Right ventricle myocardium inferior (tissue), 1 donor: ENCODE measurements at regions of chr10 and their contacts with region 1.

Region 1: DNA sequence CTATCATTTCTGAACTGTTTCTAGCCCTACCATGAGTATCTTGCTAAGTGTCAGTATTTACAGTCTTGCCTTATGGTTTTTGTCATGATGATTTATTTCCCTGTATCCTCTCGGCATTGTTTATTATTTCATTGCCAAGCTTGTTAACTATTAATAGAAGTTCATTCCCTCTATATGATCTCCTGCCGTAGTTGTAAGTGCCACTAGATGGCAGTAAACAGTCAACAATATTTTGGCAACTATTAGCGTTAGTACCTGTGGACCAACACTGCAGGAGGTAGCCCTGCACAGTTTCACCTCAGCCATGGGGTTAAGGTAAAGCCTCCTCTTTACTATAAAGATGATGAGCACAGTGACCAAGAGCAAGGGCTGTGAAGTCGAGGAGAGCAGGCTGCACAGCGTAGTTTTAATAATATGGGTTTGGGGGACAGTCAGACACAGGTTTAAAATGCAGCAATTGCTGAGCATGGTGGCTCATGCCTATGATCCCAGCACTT is 26.1 kb upstream of the CCNJ start:
- DNase-seq: no peak
- ATAC-seq: peak; percentile 70

Region 2: GRCh38 chr10:96129387-96130325 is 112.4 kb after region 1 on chr10 and contains the start of gene ZNF518A:
- intact Hi-C with region 1: loop called (anchors 10 kb)
- DNase-seq: peak; percentile 96
- ATAC-seq: peak; percentile 96
- total RNA-seq, gene ZNF518A: 10.9 TPM

Region 3: DNA sequence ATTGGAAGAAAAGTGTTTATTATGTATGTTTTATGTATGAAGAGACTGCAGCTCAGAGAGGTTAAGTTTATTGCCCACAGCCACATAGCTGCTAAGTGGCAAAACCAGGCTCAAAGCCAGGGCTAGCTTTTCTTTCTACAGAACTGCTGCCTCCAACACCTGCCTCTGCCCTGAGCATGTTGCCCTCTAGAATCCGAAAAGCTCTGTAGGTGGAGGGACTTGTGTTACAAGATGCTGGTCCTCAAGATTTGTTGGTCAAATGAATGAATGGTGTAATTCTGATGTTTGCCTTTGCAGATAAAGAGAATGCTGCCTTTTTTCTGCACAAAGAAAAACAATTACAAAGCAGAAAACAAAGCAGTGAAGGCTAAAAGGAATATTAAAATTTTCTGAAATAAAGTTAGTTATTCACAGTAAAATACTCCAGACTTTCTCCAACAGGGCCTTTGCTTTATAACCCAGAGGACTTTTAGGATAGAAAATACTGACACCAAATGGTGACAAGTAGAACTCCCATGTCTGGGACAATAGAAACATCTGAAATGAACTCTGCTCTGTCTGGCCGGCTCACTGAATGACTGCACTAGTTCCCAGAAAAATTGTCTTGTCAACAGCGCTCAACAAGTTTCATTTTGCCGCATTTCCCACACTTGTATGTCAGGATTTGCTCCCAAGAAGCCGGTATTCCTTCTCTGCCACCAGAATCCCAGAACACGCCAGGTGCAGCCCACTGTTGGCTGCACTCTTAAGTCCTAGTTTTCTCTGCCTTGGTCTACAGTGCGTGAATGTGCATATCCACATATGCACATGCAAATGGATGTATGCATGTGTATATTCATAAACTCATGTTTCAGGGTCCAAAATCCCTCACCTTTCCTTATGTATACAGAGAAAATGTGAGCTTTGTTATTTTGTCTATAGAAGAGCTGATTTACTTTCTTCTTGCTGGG is 276.0 kb after region 1 on chr10:
- intact Hi-C with region 1: loop called (anchors 5 kb)
- DNase-seq: no peak
- ATAC-seq: peak; percentile 76